Activated naive CD4-positive, alpha-beta T cell treated with anti-CD3 and anti-CD28 coated beads for 36 hours (primary cell): ENCODE measurements at regions of chr2 and their contacts with region 1.

Region 1: GRCh38 chr2:143150287-143150686 is 21.1 kb downstream of the ARHGAP15 start:
- DNase-seq: peak; percentile 33
- H3K4me3 Mint-ChIP-seq: peak overlapping the region; percentile 52
- H3K27ac Mint-ChIP-seq: peak overlapping the region; percentile 91
- H3K4me1 Mint-ChIP-seq: peaks cover 80% of the 10 kb centered on the region
- H3K27me3 Mint-ChIP-seq: no peaks in the 10 kb centered on the region

Region 2: DNA sequence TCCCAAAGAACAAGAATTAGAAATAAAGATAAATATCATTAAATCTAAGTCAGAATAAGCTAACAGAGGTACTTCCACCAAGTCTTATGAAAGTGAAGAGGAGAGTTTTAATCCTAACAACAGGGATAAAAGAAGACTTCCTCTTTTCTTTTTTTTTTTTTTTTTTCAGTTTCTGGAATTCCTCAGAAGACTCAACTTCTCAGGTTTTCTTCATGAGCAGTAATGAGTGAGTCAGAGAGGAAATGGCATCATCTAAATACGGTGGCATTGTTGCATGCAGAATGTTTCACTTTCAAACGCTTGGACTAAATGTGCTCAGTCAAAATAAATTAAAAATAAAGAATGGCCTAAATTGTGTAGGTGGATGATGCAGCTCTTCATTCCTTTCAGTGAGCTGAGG is 66.7 kb before region 1 on chr2:
- CTCF ChIA-PET with region 1: no interaction called
- intact Hi-C with region 1: loop called (anchors 2 kb)
- DNase-seq: peak; percentile 15
- H3K4me3 Mint-ChIP-seq: no peak overlapping the region
- H3K27ac Mint-ChIP-seq: no peak overlapping the region
- H3K4me1 Mint-ChIP-seq: peaks cover 27% of the 10 kb centered on the region
- H3K27me3 Mint-ChIP-seq: no peaks in the 10 kb centered on the region

Region 3: GRCh38 chr2:143345887-143346787 is 195.8 kb after region 1 on chr2:
- CTCF ChIA-PET with region 1: no interaction called
- intact Hi-C with region 1: no loop called
- DNase-seq: no peak
- H3K4me3 Mint-ChIP-seq: no peak overlapping the region
- H3K27ac Mint-ChIP-seq: no peak overlapping the region
- H3K4me1 Mint-ChIP-seq: peaks cover 17% of the 10 kb centered on the region
- H3K27me3 Mint-ChIP-seq: no peaks in the 10 kb centered on the region

Region 4: DNA sequence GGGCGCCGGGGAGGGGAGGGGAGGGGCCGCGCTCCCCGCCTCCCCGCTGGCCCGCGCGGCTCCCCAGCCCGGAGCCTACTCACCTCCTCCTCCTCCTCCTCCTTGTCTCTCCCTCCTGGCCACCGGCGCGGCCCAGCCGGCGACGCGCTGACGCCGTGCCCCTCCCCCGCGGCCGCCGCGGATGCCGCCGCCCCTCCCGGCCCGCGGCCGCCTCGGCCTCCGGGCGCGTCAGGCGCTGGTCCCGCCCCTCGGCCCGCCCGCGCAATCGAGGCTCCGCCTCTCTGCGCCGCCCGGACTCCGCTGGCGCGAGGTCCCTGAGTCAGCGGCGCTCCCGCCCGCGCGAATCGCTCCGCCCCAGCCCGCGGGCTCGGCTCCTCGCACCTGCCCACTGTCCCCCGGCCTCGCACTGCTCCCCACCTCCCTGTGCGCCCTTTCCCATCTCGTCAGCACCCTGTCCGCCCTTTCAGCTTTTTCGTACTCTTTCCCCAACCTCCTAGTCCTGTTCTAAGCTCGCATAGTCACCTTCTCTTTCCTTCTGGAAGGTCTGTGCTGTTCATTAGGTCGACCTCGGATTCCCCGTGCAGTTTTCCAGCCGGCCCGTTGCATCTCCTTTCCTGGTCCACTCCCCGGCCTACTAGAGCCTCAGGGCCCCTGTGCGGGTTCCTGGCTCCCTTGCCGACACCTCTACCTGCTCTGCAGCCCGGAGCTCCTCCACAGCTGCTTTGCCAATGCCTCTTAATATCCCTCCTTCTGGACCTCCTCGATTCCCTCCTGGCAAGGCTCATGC is 1182.3 kb after region 1 on chr2:
- CTCF ChIA-PET with region 1: no interaction called
- intact Hi-C with region 1: loop called (anchors 5 kb)
- DNase-seq: peak; percentile 83
- H3K4me3 Mint-ChIP-seq: peak overlapping the region; percentile 79
- H3K27ac Mint-ChIP-seq: peak overlapping the region; percentile 78
- H3K4me1 Mint-ChIP-seq: peaks cover 19% of the 10 kb centered on the region
- H3K27me3 Mint-ChIP-seq: no peaks in the 10 kb centered on the region